Mammary epithelial cell (primary cell): ENCODE measurements at regions of chr20 and their contacts with region 1.

Region 1: GRCh38 chr20:63739130-63740069 is at the start of gene SLC2A4RG:
- DNase-seq: peak; percentile 63
- H3K4me3 ChIP-seq: peak within 1 kb of the TSS; percentile 60 to 75 (median 64)
- H3K27ac ChIP-seq: no peak within 1 kb of the TSS
- H3K4me1 ChIP-seq: peaks cover 37% of the 10 kb centered on the region
- H3K27me3 ChIP-seq: no peaks in the 10 kb centered on the region
- CTCF ChIP-seq: no peak
- total RNA-seq, gene SLC2A4RG: 35.8 to 101 TPM

Region 2: GRCh38 chr20:63641792-63642544 is 97.4 kb before region 1 on chr20:
- CTCF ChIA-PET with region 1: interaction called, 10 read pairs
- dilution Hi-C with region 1: no loop called
- in situ Hi-C with region 1: no loop called
- intact Hi-C with region 1: no loop called
- DNase-seq: peak; percentile 91
- H3K4me3 ChIP-seq: peak overlapping the region; percentile 57 to 60 (median 57)
- H3K27ac ChIP-seq: no peak overlapping the region
- H3K4me1 ChIP-seq: peaks cover 18% of the 10 kb centered on the region
- H3K27me3 ChIP-seq: no peaks in the 10 kb centered on the region
- CTCF ChIP-seq: peak; percentile 29 to 54

Region 3: DNA sequence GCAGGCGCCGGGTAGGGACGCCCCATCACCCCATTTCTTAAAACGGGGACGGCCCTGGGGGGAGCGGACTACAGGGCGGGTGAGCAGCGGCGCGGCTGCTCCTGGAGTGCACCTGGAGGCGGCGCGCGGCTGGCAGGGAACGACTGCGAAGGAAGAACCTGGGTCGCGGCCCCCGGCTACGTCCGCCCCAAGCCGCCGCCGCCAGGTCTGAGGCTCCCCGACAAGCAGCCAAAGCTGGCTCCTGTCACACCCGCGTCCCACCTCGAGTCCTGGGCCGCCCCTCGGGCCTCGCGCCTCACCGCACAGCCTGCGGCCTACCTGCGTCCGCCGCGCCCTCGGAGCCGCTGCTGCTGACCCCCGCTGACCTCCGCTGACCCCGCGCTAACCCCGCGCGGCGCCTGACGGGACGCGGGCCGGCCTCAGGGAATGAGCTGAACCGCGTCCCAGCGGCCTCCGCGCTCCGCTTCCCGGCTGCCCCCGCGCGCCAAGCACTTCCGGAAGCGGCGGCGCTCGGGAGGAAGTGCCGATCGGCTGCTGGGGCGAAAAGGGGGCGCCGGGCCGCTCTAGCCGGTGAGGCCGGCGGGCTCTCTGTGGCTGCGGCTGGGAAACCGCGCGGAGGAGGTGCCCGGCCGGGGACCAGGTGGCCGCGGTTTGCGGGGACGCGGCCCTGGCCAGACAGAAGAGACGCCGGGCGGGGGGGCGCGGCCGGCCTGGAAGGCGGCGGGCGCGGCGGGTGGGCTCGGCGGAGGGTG is 31.7 kb before region 1 on chr20 and contains the starts of genes ARFRP1 and ZGPAT:
- CTCF ChIA-PET with region 1: no interaction called
- dilution Hi-C with region 1: loop called (anchors 5 kb)
- in situ Hi-C with region 1: no loop called
- intact Hi-C with region 1: loop called (anchors 2 kb)
- DNase-seq: peak; percentile 81
- H3K4me3 ChIP-seq: peak within 1 kb of the TSS; percentile 79 to 88 (median 84)
- H3K27ac ChIP-seq: peak within 1 kb of the TSS; percentile 34
- H3K4me1 ChIP-seq: peaks cover 21% of the 10 kb centered on the region
- H3K27me3 ChIP-seq: no peaks in the 10 kb centered on the region
- CTCF ChIP-seq: no peak
- total RNA-seq, gene ARFRP1: 28.8 to 61.1 TPM
- total RNA-seq, gene ZGPAT: 11.8 to 20.9 TPM